GM12878 (cell line): ENCODE measurements at regions of chr1 and their contacts with region 1.

Region 1: GRCh38 chr1:51768971-51769588 is 109.4 kb downstream of the NRDC start:
- DNase-seq: no peak
- ATAC-seq: peak; percentile 86
- H3K4me3 ChIP-seq: no peak overlapping the region
- H3K27ac ChIP-seq: no peak overlapping the region
- H3K4me1 ChIP-seq: peaks cover 3% of the 10 kb centered on the region; the same call in 1 of the 2 replicates
- H3K27me3 ChIP-seq: no peaks in the 10 kb centered on the region
- CTCF ChIP-seq: peak; percentile 58 to 74 (median 69)
- EP300 ChIP-seq: no peak
- POLR2A ChIP-seq: no peak
- RAD21 ChIP-seq: peak; percentile 74

Region 2: GRCh38 chr1:51616901-51617708 is 152.0 kb before region 1 on chr1 and contains the start of gene OSBPL9:
- CTCF ChIA-PET with region 1: interaction called, 64 read pairs
- POLR2A ChIA-PET with region 1: no interaction called
- RAD21 ChIA-PET with region 1: interaction called, 4 read pairs
- SMC1A ChIA-PET with region 1: interaction called, 95 read pairs
- in situ Hi-C with region 1: no loop called
- intact Hi-C with region 1: no loop called
- DNase-seq: peak; percentile 45
- ATAC-seq: peak; percentile 96
- H3K4me3 ChIP-seq: peak within 1 kb of the TSS; percentile 98
- H3K27ac ChIP-seq: peak within 1 kb of the TSS; percentile 49
- H3K4me1 ChIP-seq: no peaks in the 10 kb centered on the region
- H3K27me3 ChIP-seq: no peaks in the 10 kb centered on the region
- CTCF ChIP-seq: no peak
- EP300 ChIP-seq: no peak
- POLR2A ChIP-seq: peak; percentile 92
- RAD21 ChIP-seq: no peak
- polyA plus RNA-seq, gene OSBPL9: 25.9 to 41.9 TPM

Region 3: GRCh38 chr1:51648180-51649109 is 120.6 kb before region 1 on chr1:
- CTCF ChIA-PET with region 1: interaction called, 11 read pairs
- POLR2A ChIA-PET with region 1: no interaction called
- RAD21 ChIA-PET with region 1: interaction called, 3 read pairs
- SMC1A ChIA-PET with region 1: interaction called, 6 read pairs
- in situ Hi-C with region 1: no loop called
- intact Hi-C with region 1: no loop called
- DNase-seq: no peak
- ATAC-seq: peak; percentile 42
- H3K4me3 ChIP-seq: no peak overlapping the region
- H3K27ac ChIP-seq: no peak overlapping the region
- H3K4me1 ChIP-seq: no peaks in the 10 kb centered on the region
- H3K27me3 ChIP-seq: no peaks in the 10 kb centered on the region
- CTCF ChIP-seq: no peak
- EP300 ChIP-seq: no peak
- POLR2A ChIP-seq: no peak
- RAD21 ChIP-seq: no peak

Region 4: DNA sequence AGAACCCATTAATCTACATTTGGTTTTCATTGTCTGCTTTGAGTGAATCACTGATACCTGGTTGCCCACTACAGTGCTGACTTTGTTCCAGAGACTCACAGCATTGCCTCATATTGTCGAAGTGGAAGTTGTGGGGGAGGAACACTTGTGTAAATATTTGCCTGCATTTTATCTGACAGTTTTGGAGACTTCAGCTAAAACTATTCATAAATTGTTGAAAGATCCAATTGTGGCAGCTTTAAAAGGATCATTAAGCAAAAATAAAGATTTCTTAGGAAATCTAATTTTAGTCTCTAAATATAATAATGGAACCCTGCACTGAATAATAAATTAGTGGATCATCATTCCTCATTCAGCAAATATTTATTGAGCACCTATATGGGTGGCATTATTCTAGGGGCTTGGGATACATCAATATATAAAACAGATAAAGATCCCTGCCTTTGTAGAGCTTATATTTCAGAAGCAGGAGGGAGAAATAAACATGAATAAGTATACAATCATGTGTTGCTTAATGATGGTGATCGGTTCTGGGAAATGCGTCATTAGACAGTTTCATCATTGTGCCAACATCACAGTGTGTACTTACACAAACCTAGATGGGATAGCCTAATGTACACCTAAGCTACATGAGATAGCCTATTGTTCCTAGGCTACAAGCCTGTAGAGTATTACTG is 78.7 kb before region 1 on chr1:
- CTCF ChIA-PET with region 1: interaction called, 12 read pairs
- POLR2A ChIA-PET with region 1: interaction called, 3 read pairs
- RAD21 ChIA-PET with region 1: no interaction called
- SMC1A ChIA-PET with region 1: interaction called, 6 read pairs
- in situ Hi-C with region 1: no loop called
- intact Hi-C with region 1: no loop called
- DNase-seq: no peak
- ATAC-seq: peak; percentile 38; the same call in 1 of the 3 replicates
- H3K4me3 ChIP-seq: no peak overlapping the region
- H3K27ac ChIP-seq: no peak overlapping the region
- H3K4me1 ChIP-seq: peaks cover 7% of the 10 kb centered on the region
- H3K27me3 ChIP-seq: no peaks in the 10 kb centered on the region
- CTCF ChIP-seq: no peak
- EP300 ChIP-seq: no peak
- POLR2A ChIP-seq: no peak
- RAD21 ChIP-seq: no peak

Region 5: DNA sequence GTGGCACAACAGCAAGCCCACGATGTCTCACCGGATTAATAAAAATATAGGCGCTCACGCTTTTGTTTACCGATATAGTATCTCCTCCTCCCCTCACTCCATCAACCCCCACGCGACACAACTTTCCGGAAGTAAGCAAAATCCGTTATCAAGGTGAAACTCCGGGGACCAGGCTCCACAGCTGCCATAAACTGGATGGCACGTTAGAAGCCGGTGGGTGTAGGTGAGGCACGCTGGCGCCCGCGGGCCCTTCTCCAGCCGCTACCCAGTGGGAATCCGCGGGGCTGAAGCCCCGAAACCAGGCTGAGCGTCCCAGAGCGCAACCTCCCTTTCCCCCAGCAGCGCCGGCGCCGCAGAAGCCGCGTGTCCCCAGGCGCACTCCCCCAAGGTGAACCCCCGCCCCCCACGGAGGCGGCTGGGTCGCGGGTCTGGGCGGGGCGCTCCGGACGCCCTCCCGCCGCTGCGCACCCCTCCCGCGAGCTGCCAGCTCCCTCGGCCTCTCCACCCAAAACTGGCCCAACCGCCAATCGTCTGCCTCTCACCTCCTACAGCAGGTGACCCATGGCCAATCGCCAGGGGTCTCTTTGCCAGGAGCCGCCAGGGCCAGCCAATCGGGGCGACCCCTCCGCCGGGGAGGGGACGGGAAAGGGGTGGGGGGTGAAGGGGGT is 39.8 kb before region 1 on chr1:
- CTCF ChIA-PET with region 1: interaction called, 27 read pairs
- POLR2A ChIA-PET with region 1: interaction called, 6 read pairs
- RAD21 ChIA-PET with region 1: interaction called, 10 read pairs
- SMC1A ChIA-PET with region 1: interaction called, 14 read pairs
- in situ Hi-C with region 1: no loop called
- intact Hi-C with region 1: no loop called
- DNase-seq: peak; percentile 87
- ATAC-seq: peak; percentile 91
- H3K4me3 ChIP-seq: peak overlapping the region; percentile 88
- H3K27ac ChIP-seq: peak overlapping the region; percentile 95
- H3K4me1 ChIP-seq: peaks cover 26% of the 10 kb centered on the region
- H3K27me3 ChIP-seq: no peaks in the 10 kb centered on the region
- CTCF ChIP-seq: no peak
- EP300 ChIP-seq: peak in 1 of 2 experiments; percentile 43; a peak in 2 of 4 replicates
- POLR2A ChIP-seq: peak; percentile 94
- RAD21 ChIP-seq: no peak